ENCODE measurements at regions of chr22 and their contacts with region 1.

Region 1: GRCh38 chr22:41517172-41518047 is 26.9 kb downstream of the POLR3H start:
- DNase-seq: peak; percentile 60
- ATAC-seq: no peak
- H3K4me3 ChIP-seq: no peak overlapping the region
- H3K4me3 Mint-ChIP-seq: no peak overlapping the region
- H3K27ac ChIP-seq: no peak overlapping the region
- H3K27ac Mint-ChIP-seq: peak overlapping the region; percentile 37
- H3K4me1 ChIP-seq: no peaks in the 10 kb centered on the region
- H3K4me1 Mint-ChIP-seq: no peaks in the 10 kb centered on the region
- H3K27me3 ChIP-seq: no peaks in the 10 kb centered on the region
- H3K27me3 Mint-ChIP-seq: no peaks in the 10 kb centered on the region
- CTCF ChIP-seq: peak; percentile 71

Region 2: GRCh38 chr22:40922484-40923303 is 594.7 kb before region 1 on chr22:
- CTCF ChIA-PET with region 1: no interaction called
- POLR2A ChIA-PET with region 1: no interaction called
- intact Hi-C with region 1: no loop called
- DNase-seq: peak; percentile 83
- ATAC-seq: peak; percentile 94
- H3K4me3 ChIP-seq: peak overlapping the region in 2 of 5 experiments; percentile 12 to 47
- H3K4me3 Mint-ChIP-seq: peak overlapping the region; percentile 67
- H3K27ac ChIP-seq: no peak overlapping the region
- H3K27ac Mint-ChIP-seq: peak overlapping the region; percentile 32
- H3K4me1 ChIP-seq: peaks cover 4 to 5% of the 10 kb centered on the region in 2 donors
- H3K4me1 Mint-ChIP-seq: peaks cover 4% of the 10 kb centered on the region
- H3K27me3 ChIP-seq: no peaks in the 10 kb centered on the region
- H3K27me3 Mint-ChIP-seq: no peaks in the 10 kb centered on the region
- CTCF ChIP-seq: peak; percentile 87

Region 3: GRCh38 chr22:41410311-41410751 is 107.1 kb before region 1 on chr22:
- CTCF ChIA-PET with region 1: interaction called, 228 read pairs
- POLR2A ChIA-PET with region 1: interaction called, 4 read pairs
- intact Hi-C with region 1: no loop called
- DNase-seq: no peak
- ATAC-seq: no peak
- H3K4me3 ChIP-seq: no peak overlapping the region
- H3K4me3 Mint-ChIP-seq: no peak overlapping the region
- H3K27ac ChIP-seq: peak overlapping the region in 1 of 2 donors; percentile 99
- H3K27ac Mint-ChIP-seq: peak overlapping the region; percentile 86
- H3K4me1 ChIP-seq: peaks cover 30 to 55% of the 10 kb centered on the region in 2 donors
- H3K4me1 Mint-ChIP-seq: peaks cover 53% of the 10 kb centered on the region
- H3K27me3 ChIP-seq: no peaks in the 10 kb centered on the region
- H3K27me3 Mint-ChIP-seq: no peaks in the 10 kb centered on the region
- CTCF ChIP-seq: no peak

Region 4: DNA sequence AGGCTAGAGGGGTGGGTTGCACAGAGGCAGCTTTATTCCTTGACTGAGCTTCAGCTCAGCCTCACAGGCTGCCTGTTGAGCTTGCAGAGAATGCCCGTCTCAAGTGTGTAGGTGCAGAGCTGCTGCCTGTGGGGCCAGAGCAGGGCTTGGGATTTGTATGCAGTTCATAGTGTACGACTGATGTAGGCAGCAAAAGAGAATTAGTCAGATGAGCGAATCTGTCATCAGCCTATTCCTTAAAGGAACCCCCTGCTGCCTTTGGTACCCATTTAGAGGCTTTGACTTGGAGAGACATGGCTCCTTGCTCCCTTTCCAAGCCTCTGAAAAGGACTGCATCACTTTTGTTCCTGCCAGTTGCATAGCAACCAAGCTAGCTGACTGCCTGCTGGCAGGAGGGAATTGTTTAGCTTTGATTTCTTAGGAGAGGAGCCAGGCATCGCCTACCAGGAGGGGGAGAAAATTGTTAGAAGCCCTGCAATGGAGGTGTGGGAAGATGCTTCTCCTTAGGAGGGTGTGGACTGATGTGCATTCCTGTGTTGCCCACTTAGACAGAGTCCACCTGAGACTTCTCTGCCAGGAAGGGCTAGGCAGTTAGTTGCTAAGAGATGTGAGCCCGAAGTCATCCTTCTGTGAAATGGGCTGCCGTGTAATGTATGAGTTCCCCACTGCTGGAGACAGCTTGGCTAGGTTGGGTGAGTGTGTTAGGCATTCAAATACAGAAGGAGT is 37.6 kb before region 1 on chr22:
- CTCF ChIA-PET with region 1: interaction called, 17 read pairs
- POLR2A ChIA-PET with region 1: no interaction called
- intact Hi-C with region 1: no loop called
- DNase-seq: no peak
- ATAC-seq: no peak
- H3K4me3 ChIP-seq: peak overlapping the region in 4 of 5 experiments; percentile 0 to 25 (median 12)
- H3K4me3 Mint-ChIP-seq: peak overlapping the region; percentile 76
- H3K27ac ChIP-seq: peak overlapping the region; percentile 82 to 86
- H3K27ac Mint-ChIP-seq: peak overlapping the region; percentile 95
- H3K4me1 ChIP-seq: peaks cover 84 to 95% of the 10 kb centered on the region in 2 donors
- H3K4me1 Mint-ChIP-seq: peaks cover 77% of the 10 kb centered on the region
- H3K27me3 ChIP-seq: no peaks in the 10 kb centered on the region
- H3K27me3 Mint-ChIP-seq: no peaks in the 10 kb centered on the region
- CTCF ChIP-seq: no peak

Measured in B cell (primary cell).